ENCODE measurements at regions of chr16 and their contacts with region 1.

Region 1: GRCh38 chr16:69396187-69397061 is 10.6 kb upstream of the TERF2 start:
- DNase-seq: no peak
- H3K4me3 ChIP-seq: no peak overlapping the region
- H3K27ac ChIP-seq: peak overlapping the region; percentile 84
- H3K4me1 ChIP-seq: peaks cover 31% of the 10 kb centered on the region
- H3K27me3 ChIP-seq: no peaks in the 10 kb centered on the region
- CTCF ChIP-seq: peak; percentile 52 to 82 (median 79)
- POLR2A ChIP-seq: no peak

Region 2: GRCh38 chr16:69565671-69566239 is 169.3 kb after region 1 on chr16 and contains the start of gene NFAT5:
- intact Hi-C with region 1: loop called (anchors 10 kb)
- DNase-seq: peak in 1 of 2 donors; percentile 94
- H3K4me3 ChIP-seq: peak within 1 kb of the TSS; percentile 97 to 98
- H3K27ac ChIP-seq: peak within 1 kb of the TSS; percentile 99
- H3K4me1 ChIP-seq: peaks cover 41% of the 10 kb centered on the region
- H3K27me3 ChIP-seq: no peaks in the 10 kb centered on the region
- CTCF ChIP-seq: peak in 1 of 3 experiments; percentile 3
- POLR2A ChIP-seq: peak in 1 of 2 donors; percentile 97
- total RNA-seq, gene NFAT5: 63.8 TPM

Measured in vagina (tissue), 2 donors.